Dorsolateral prefrontal cortex (tissue), 120 donors: ENCODE measurements at regions of chr6 and their contacts with region 1.

Region 1: GRCh38 chr6:150600301-150601017 is 774 bp downstream of the PLEKHG1 start:
- DNase-seq: peak in 8 of 10 donors; percentile 40 to 68 (median 58)
- H3K4me3 ChIP-seq: peak overlapping the region; percentile 53 to 88 (median 77)
- H3K27ac ChIP-seq: peak overlapping the region in 58 of 59 donors; percentile 2 to 92 (median 80)
- H3K27me3 ChIP-seq: peaks cover 0 to 5% (median 0%) of the 10 kb centered on the region in 45 donors
- CTCF ChIP-seq: peak in 38 of 56 donors; percentile 2 to 55 (median 26)

Region 2: GRCh38 chr6:150547502-150548222 is 52.8 kb before region 1 on chr6:
- intact Hi-C with region 1: no loop called
- DNase-seq: peak in 2 of 10 donors; percentile 38 to 41
- H3K4me3 ChIP-seq: peak overlapping the region in 3 of 59 donors; percentile 4 to 9 (median 7)
- H3K27ac ChIP-seq: no peak overlapping the region
- H3K27me3 ChIP-seq: peaks cover 0 to 22% (median 0%) of the 10 kb centered on the region in 45 donors
- CTCF ChIP-seq: no peak

Region 3: GRCh38 chr6:150667977-150668716 is 67.7 kb after region 1 on chr6:
- intact Hi-C with region 1: loop called in 1 of 2 experiments (anchors 10 kb)
- DNase-seq: peak in 8 of 10 donors; percentile 8 to 72 (median 59)
- H3K4me3 ChIP-seq: peak overlapping the region in 1 of 59 donors; percentile 12
- H3K27ac ChIP-seq: peak overlapping the region in 49 of 59 donors; percentile 12 to 84 (median 70)
- H3K27me3 ChIP-seq: no peaks in the 10 kb centered on the region
- CTCF ChIP-seq: peak in 11 of 56 donors; percentile 6 to 37 (median 16)

Region 4: GRCh38 chr6:150741633-150742504 is 141.4 kb after region 1 on chr6:
- intact Hi-C with region 1: loop called in 1 of 2 experiments (anchors 10 kb)
- DNase-seq: no peak
- H3K4me3 ChIP-seq: no peak overlapping the region
- H3K27ac ChIP-seq: peak overlapping the region in 4 of 59 donors; percentile 26 to 80 (median 48)
- H3K27me3 ChIP-seq: peaks cover 0 to 4% (median 0%) of the 10 kb centered on the region in 45 donors
- CTCF ChIP-seq: peak in 52 of 56 donors; percentile 9 to 59 (median 39)